Left ventricle myocardium superior (tissue), 1 donor: ENCODE measurements at regions of chr1 and their contacts with region 1.

Region 1: DNA sequence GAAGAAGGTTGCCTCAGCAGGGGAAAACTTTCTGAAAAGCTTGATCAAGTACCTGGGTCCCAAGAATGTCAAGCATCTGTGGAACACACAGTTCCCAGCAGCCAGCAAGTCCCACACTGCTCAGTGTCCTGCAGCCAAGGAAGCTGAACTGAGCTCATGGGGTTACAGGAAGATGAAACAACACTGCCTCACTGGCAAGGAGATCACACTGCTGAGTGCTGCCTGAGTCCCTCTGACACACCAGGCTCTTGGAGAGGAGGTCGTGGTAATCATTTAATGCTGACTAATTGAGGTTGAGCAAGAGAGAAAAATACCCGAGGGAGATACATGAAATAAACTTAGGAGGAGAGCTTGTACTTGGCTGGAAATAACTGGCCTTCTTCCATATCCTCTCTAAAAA is 75.2 kb downstream of the MPZL1 start:
- DNase-seq: peak; percentile 75
- ATAC-seq: peak; percentile 97

Region 2: GRCh38 chr1:167721617-167722151 is 75.3 kb before region 1 on chr1 and contains the start of gene MPZL1:
- intact Hi-C with region 1: loop called (anchors 5 kb)
- DNase-seq: peak; percentile 98
- ATAC-seq: peak; percentile 99
- total RNA-seq, gene MPZL1: 34.7 TPM

Region 3: GRCh38 chr1:167748906-167749305 is 48.1 kb before region 1 on chr1:
- intact Hi-C with region 1: no loop called
- DNase-seq: no peak
- ATAC-seq: no peak

Region 4: GRCh38 chr1:168187177-168187576 is 390.2 kb after region 1 on chr1:
- intact Hi-C with region 1: no loop called
- DNase-seq: no peak
- ATAC-seq: no peak